Caco-2 (cell line): ENCODE measurements at regions of chr19 and their contacts with region 1.

Region 1: DNA sequence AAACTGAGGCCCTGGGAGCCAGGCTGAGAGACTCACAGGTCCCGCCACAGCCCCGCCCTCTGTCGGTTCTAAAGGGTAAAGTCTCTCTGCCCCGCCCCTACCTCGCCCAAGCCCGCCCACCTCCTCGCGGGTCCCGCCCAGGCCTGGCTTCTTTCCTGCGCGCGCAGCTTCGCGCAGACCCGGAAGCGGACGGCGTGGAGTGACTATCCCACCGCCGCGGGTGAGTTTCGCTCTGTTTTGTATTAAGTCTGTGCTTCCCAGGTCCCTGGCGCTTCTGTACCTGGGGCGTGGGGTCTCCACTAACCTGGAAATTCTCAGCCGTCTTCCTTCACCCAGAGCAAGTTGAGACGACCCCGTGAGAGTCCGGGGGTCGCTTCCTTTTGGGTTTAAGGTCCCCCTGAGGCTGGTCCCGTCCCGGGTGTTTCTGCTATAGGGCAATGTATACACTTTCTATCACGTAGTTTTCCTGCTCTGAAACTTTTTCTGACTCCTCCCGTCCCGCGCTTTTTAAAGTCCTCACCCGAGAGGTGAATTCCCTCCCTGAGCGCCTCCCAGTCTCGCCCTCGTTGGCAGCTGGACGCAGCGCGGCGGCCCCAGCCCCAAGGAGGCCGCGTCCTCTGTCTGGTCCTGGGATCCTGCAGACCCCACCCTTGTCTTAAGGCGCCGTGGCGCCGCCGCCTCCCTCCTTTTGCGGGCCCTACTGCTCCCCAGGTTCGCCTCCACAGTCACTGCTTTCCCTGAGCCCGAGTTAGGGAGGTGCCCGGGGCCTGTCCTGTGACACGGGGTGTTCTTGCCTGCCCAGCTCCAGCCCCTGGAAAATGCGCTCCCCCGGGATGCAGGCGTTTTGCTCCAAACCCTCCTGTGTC is at the start of gene ZNF765:
- DNase-seq: peak; percentile 93 to 96
- H3K4me3 ChIP-seq: peak within 1 kb of the TSS; percentile 83
- H3K4me3 Mint-ChIP-seq: peak within 1 kb of the TSS; percentile 77
- H3K27ac Mint-ChIP-seq: peak within 1 kb of the TSS; percentile 65
- H3K4me1 ChIP-seq: peaks cover 8% of the 10 kb centered on the region
- H3K4me1 Mint-ChIP-seq: peaks cover 19% of the 10 kb centered on the region
- H3K27me3 ChIP-seq: no peaks in the 10 kb centered on the region
- H3K27me3 Mint-ChIP-seq: no peaks in the 10 kb centered on the region
- CTCF ChIP-seq: peak; percentile 58 to 76
- total RNA-seq, gene ZNF765: 13.1 and 18.6 TPM in 2 replicates

Region 2: DNA sequence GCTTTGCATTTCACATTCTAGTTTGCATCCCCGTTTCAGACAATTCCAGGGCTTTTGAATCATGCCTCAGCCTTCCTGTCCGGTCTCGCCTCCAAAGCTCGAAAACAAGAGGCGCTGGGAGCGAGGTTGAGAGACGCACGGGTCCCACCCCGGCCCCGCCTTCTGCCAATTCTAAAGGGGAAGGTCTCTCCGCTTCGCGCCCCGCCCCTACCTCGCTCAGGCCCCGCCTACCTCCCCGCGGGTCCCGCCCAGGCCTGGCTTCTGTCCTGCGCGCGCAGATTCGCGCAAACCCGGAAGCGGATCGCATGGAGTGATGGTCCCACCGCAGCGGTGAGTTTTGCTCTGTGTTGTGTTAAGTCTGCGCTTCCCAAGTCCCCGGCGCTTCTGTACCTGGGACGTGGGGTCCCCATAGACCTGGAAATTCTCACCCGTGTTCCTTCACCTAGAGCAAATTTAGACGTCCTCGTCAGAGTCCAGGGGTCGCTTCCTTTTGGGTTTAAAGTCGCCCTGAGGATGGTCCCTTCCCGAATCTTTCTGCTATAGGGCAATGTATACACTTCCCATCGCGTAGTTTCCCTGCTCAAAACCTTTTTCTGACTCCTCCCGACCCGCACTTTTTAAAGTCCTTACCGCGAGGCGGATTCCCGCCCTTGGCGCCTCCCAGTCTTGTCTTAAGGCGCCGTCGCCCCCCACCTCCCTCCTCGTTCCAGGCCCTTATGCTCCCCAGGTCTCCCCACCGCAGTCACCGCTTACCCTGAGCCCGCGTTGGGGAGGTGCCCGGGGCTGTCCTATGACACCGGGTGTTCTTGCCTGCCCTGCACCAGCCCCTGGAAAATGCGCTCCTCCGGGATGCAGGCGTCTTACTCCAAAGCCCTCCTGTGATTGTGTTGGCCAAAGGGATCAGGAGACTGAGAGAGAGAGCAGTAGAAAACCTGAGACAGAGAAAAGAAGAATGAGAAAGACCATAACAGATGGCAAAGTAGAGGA is 61.5 kb before region 1 on chr19 and contains the start of gene ZNF845:
- CTCF ChIA-PET with region 1: no interaction called
- POLR2A ChIA-PET with region 1: no interaction called
- intact Hi-C with region 1: loop called (anchors 2 kb)
- DNase-seq: peak; percentile 97 to 98
- H3K4me3 ChIP-seq: peak within 1 kb of the TSS; percentile 51
- H3K4me3 Mint-ChIP-seq: peak within 1 kb of the TSS; percentile 82
- H3K27ac Mint-ChIP-seq: peak within 1 kb of the TSS; percentile 60
- H3K4me1 ChIP-seq: 0 out of 2 replicates have a peak, but pooled peaks cover 3% of the 10 kb centered on the region
- H3K4me1 Mint-ChIP-seq: peaks cover 8% of the 10 kb centered on the region
- H3K27me3 ChIP-seq: no peaks in the 10 kb centered on the region
- H3K27me3 Mint-ChIP-seq: no peaks in the 10 kb centered on the region
- CTCF ChIP-seq: no peak
- total RNA-seq, gene ZNF845: 8.0 and 8.9 TPM in 2 replicates